ENCODE measurements at regions of chr12 and their contacts with region 1.

Region 1: GRCh38 chr12:51293696-51294095 is 23.5 kb upstream of the SMAGP start:
- DNase-seq: no peak
- ATAC-seq: no peak
- H3K4me3 ChIP-seq: no peak overlapping the region
- H3K4me3 Mint-ChIP-seq: no peak overlapping the region
- H3K27ac ChIP-seq: no peak overlapping the region
- H3K27ac Mint-ChIP-seq: peak overlapping the region in 8 of 9 donors; percentile 16 to 83 (median 66)
- H3K4me1 ChIP-seq: peaks cover 0 to 5% of the 10 kb centered on the region in 2 donors
- H3K4me1 Mint-ChIP-seq: peaks cover 10 to 33% (median 19%) of the 10 kb centered on the region in 7 donors
- H3K27me3 ChIP-seq: no peaks in the 10 kb centered on the region
- H3K27me3 Mint-ChIP-seq: no peaks in the 10 kb centered on the region

Region 2: GRCh38 chr12:51307655-51308593 is 14.2 kb after region 1 on chr12:
- CTCF ChIA-PET with region 1: no interaction called
- POLR2A ChIA-PET with region 1: interaction called, 4 read pairs
- intact Hi-C with region 1: loop called in 1 of 2 experiments (anchors 2 kb)
- DNase-seq: peak in 3 of 9 donors; percentile 24 to 45 (median 33)
- ATAC-seq: no peak
- H3K4me3 ChIP-seq: no peak overlapping the region
- H3K4me3 Mint-ChIP-seq: peak overlapping the region in 8 of 10 donors; percentile 22 to 60 (median 50)
- H3K27ac ChIP-seq: peak overlapping the region; percentile 23
- H3K27ac Mint-ChIP-seq: peak overlapping the region; percentile 65 to 91 (median 86)
- H3K4me1 ChIP-seq: peaks cover 18 to 31% of the 10 kb centered on the region in 2 donors
- H3K4me1 Mint-ChIP-seq: peaks cover 33 to 82% (median 63%) of the 10 kb centered on the region in 7 donors
- H3K27me3 ChIP-seq: no peaks in the 10 kb centered on the region
- H3K27me3 Mint-ChIP-seq: no peaks in the 10 kb centered on the region

Region 3: GRCh38 chr12:52268212-52268611 is 974.5 kb after region 1 on chr12:
- CTCF ChIA-PET with region 1: no interaction called
- POLR2A ChIA-PET with region 1: no interaction called
- intact Hi-C with region 1: no loop called
- DNase-seq: no peak
- ATAC-seq: no peak
- H3K4me3 ChIP-seq: no peak overlapping the region
- H3K4me3 Mint-ChIP-seq: no peak overlapping the region
- H3K27ac ChIP-seq: no peak overlapping the region
- H3K27ac Mint-ChIP-seq: no peak overlapping the region
- H3K4me1 ChIP-seq: no peaks in the 10 kb centered on the region
- H3K4me1 Mint-ChIP-seq: peaks cover 0 to 3% (median 0%) of the 10 kb centered on the region in 7 donors
- H3K27me3 ChIP-seq: no peaks in the 10 kb centered on the region
- H3K27me3 Mint-ChIP-seq: peaks cover 11 to 38% (median 17%) of the 10 kb centered on the region in 5 donors

Measured in naive thymus-derived CD4-positive, alpha-beta T cell (primary cell).